Endothelial cell of umbilical vein (primary cell): ENCODE measurements at regions of chr4 and their contacts with region 1.

Region 1: DNA sequence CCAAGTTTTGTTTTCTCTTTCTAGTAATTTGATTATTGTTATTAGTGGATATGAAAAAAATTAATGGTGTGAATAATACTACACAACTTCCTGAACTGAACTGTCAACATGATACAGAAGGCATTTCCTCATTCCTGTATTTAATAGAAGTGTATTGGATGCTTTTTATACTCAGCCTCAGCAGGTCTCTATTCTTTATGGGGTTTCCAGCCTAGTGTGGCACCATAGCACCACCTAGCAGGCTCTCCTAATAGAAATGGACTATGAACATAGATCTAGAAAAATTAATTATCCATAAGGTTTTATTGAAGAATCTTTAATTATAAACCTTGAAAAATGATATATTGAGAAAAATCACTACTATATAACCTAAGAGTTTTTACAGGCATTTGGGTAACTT is 52.4 kb downstream of the GLRB start:
- DNase-seq: peak; percentile 74
- H3K4me3 ChIP-seq: no peak overlapping the region
- H3K27ac ChIP-seq: no peak overlapping the region
- H3K4me1 ChIP-seq: no peaks in the 10 kb centered on the region
- H3K27me3 ChIP-seq: no peaks in the 10 kb centered on the region
- CTCF ChIP-seq: peak; percentile 20 to 33
- POLR2A ChIP-seq: no peak

Region 2: DNA sequence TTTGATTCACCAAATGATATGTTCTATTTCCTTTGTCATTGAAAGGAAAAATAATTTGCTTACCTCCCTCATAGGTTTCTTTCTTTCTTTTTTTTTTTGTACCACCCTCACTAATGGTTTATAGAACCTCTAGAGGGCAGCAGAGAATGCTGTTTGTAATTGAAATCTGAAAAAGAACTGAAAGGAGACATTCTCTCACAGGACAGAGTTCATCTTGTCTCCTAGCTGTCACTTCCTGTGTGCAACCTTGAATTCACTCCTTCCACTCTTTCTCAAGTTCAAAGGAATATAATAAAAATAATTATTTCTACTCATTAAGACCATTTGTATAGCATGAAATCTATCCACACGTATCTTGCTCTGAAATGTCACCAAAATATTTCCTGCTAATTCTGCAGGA is 1318.6 kb before region 1 on chr4:
- CTCF ChIA-PET with region 1: no interaction called
- POLR2A ChIA-PET with region 1: no interaction called
- dilution Hi-C with region 1: no loop called
- intact Hi-C with region 1: loop called (anchors 5 kb)
- DNase-seq: peak; percentile 58
- H3K4me3 ChIP-seq: no peak overlapping the region
- H3K27ac ChIP-seq: no peak overlapping the region
- H3K4me1 ChIP-seq: peaks cover 9% of the 10 kb centered on the region
- H3K27me3 ChIP-seq: no peaks in the 10 kb centered on the region
- CTCF ChIP-seq: peak; percentile 21 to 40
- POLR2A ChIP-seq: no peak

Region 3: DNA sequence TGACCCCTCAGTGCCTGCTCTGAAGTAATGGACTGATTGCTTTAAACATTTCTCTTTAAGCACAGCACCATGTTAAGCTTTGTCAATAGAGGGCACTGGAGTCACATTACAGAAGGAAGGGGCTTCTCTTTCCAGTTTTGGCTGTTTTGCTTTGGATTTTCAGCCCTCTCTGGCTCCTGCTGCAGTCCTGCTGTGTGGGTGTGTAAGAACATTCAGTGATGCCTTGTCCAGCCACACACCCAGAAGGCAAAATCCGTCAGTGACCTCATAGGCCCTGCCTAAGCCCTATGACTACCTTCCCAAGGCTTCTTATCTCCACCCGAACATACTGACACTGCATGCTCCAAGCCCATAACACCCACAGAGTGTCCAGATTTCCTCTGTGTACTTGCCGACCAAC is 959.4 kb before region 1 on chr4:
- CTCF ChIA-PET with region 1: no interaction called
- POLR2A ChIA-PET with region 1: no interaction called
- dilution Hi-C with region 1: no loop called
- intact Hi-C with region 1: loop called (anchors 10 kb)
- DNase-seq: peak; percentile 42
- H3K4me3 ChIP-seq: no peak overlapping the region
- H3K27ac ChIP-seq: no peak overlapping the region
- H3K4me1 ChIP-seq: no peaks in the 10 kb centered on the region
- H3K27me3 ChIP-seq: no peaks in the 10 kb centered on the region
- CTCF ChIP-seq: peak; percentile 16 to 45
- POLR2A ChIP-seq: no peak

Region 4: DNA sequence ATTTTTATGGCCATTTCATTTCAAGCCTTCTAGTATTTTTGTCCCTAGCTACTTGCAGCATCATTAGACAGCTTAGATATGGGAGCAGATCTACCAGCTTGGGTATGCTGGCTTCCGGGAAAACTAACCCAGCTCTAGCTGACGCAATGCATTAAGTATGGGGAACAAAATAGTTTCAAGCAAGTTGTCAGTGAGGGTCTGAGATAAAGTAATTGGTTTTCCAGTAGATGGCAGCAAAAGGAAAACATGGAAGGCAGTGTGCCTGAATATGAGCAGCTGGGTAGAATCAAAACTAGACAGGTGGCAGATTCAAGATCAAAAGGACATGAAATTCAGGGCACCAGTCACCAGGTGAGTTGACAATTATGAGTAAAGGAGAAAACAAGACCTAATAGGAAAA is 833.8 kb before region 1 on chr4:
- CTCF ChIA-PET with region 1: no interaction called
- POLR2A ChIA-PET with region 1: no interaction called
- dilution Hi-C with region 1: no loop called
- intact Hi-C with region 1: loop called (anchors 1 kb)
- DNase-seq: peak; percentile 43
- H3K4me3 ChIP-seq: no peak overlapping the region
- H3K27ac ChIP-seq: peak overlapping the region; percentile 29
- H3K4me1 ChIP-seq: peaks cover 7% of the 10 kb centered on the region
- H3K27me3 ChIP-seq: no peaks in the 10 kb centered on the region
- CTCF ChIP-seq: no peak
- POLR2A ChIP-seq: no peak

Region 5: GRCh38 chr4:156983366-156983765 is 145.0 kb before region 1 on chr4:
- CTCF ChIA-PET with region 1: interaction called, 8 read pairs
- POLR2A ChIA-PET with region 1: no interaction called
- dilution Hi-C with region 1: no loop called
- intact Hi-C with region 1: loop called (anchors 1 kb)
- DNase-seq: peak; percentile 44
- H3K4me3 ChIP-seq: no peak overlapping the region
- H3K27ac ChIP-seq: no peak overlapping the region
- H3K4me1 ChIP-seq: no peaks in the 10 kb centered on the region
- H3K27me3 ChIP-seq: no peaks in the 10 kb centered on the region
- CTCF ChIP-seq: peak; percentile 23 to 43
- POLR2A ChIP-seq: no peak

Region 6: GRCh38 chr4:157035471-157035870 is 92.9 kb before region 1 on chr4:
- CTCF ChIA-PET with region 1: no interaction called
- POLR2A ChIA-PET with region 1: no interaction called
- dilution Hi-C with region 1: no loop called
- intact Hi-C with region 1: no loop called
- DNase-seq: peak; percentile 86
- H3K4me3 ChIP-seq: no peak overlapping the region
- H3K27ac ChIP-seq: no peak overlapping the region
- H3K4me1 ChIP-seq: no peaks in the 10 kb centered on the region
- H3K27me3 ChIP-seq: no peaks in the 10 kb centered on the region
- CTCF ChIP-seq: no peak
- POLR2A ChIP-seq: no peak

Region 7: GRCh38 chr4:157075811-157076577 is 52.4 kb before region 1 on chr4 and contains the start of gene GLRB:
- CTCF ChIA-PET with region 1: no interaction called
- POLR2A ChIA-PET with region 1: no interaction called
- dilution Hi-C with region 1: no loop called
- intact Hi-C with region 1: loop called (anchors 1 kb)
- DNase-seq: peak; percentile 45
- H3K4me3 ChIP-seq: peak within 1 kb of the TSS; percentile 66 to 76 (median 76)
- H3K27ac ChIP-seq: no peak within 1 kb of the TSS
- H3K4me1 ChIP-seq: peaks cover 5% of the 10 kb centered on the region
- H3K27me3 ChIP-seq: no peaks in the 10 kb centered on the region
- CTCF ChIP-seq: no peak
- POLR2A ChIP-seq: no peak
- total RNA-seq, gene GLRB: 5.7 and 6.2 TPM in 2 replicates